Ascending aorta (tissue), 2 donors: ENCODE measurements at regions of chr9 and their contacts with region 1.

Region 1: DNA sequence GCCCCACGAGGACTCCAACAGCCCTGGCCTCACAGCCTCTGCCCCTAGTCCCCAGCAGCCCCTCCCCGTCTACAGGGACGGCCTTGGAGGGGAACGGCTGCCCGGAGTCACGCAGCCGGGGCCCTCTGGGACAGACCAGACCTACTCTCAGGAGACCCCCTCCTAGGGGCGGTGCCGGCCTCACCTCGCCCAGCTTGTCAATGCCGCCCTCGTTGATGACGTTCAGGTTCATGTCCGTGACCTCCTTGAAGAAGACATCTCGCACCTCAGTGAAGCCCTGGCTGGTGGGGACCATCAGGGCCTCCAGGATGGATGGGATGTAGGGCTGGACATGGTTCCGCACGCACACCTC is 58.6 kb downstream of the LRSAM1 start:
- DNase-seq: no peak
- H3K4me3 ChIP-seq: no peak overlapping the region
- H3K27ac ChIP-seq: peak overlapping the region; percentile 65 to 66
- H3K4me1 ChIP-seq: peaks cover 2 to 6% of the 10 kb centered on the region in 2 donors
- H3K27me3 ChIP-seq: no peaks in the 10 kb centered on the region
- CTCF ChIP-seq: no peak

Region 2: GRCh38 chr9:127035951-127036350 is 474.0 kb before region 1 on chr9:
- intact Hi-C with region 1: no loop called
- DNase-seq: peak in 1 of 2 donors; percentile 76
- H3K4me3 ChIP-seq: no peak overlapping the region
- H3K27ac ChIP-seq: peak overlapping the region; percentile 55 to 68
- H3K4me1 ChIP-seq: peaks cover 2 to 7% of the 10 kb centered on the region in 2 donors
- H3K27me3 ChIP-seq: no peaks in the 10 kb centered on the region
- CTCF ChIP-seq: no peak

Region 3: GRCh38 chr9:127723450-127723849 is 213.5 kb after region 1 on chr9:
- intact Hi-C with region 1: loop called (anchors 5 kb)
- DNase-seq: no peak
- H3K4me3 ChIP-seq: no peak overlapping the region
- H3K27ac ChIP-seq: no peak overlapping the region
- H3K4me1 ChIP-seq: peaks cover 2 to 11% of the 10 kb centered on the region in 2 donors
- H3K27me3 ChIP-seq: no peaks in the 10 kb centered on the region
- CTCF ChIP-seq: no peak